ENCODE measurements at regions of chr1 and their contacts with region 1.

Region 1: DNA sequence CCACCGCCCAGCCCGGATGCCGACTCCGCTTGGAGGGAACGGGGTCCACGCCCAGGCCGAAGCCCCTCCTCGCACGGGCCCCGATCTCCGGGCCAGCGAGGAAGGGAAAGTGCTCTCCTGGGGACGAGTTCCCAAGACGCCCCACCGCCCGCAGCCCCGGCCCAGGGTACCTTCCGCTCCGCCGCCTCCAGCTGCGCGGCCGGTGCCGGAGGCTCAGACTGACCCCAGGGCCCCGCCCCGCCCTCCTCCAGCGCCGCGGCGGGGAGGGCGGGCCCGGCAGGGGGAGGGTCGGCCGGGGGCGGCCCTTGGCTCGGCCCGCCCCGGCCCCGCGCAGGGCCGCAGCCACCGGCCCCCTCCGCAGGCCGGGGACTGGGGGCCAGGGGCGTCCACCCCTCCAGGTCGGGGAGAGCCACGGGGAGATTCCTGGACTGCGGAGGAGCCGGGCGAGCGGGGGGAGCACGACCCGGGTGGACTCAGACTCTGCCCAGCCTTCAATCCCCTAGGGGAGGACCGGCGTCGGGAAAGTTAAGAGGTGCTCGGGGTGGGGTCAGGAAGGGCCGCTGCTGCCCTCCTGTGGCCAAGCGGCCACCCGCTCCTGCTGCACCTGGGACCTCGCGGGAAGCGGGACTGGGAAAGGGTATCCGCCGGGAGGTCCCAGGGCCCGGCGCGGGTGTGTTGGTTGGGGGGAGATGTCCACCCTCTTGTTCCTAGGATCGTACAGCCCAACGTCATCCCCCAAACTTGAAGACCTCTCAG is at the start of gene RHOC:
- DNase-seq: peak; percentile 90 to 93 (median 92)
- ATAC-seq: peak; percentile 56 to 87 (median 74)
- H3K4me3 ChIP-seq: peak within 1 kb of the TSS; percentile 75 to 100 (median 98)
- H3K27ac ChIP-seq: peak within 1 kb of the TSS; percentile 92 to 100 (median 99)
- H3K4me1 ChIP-seq: peaks cover 3 to 49% (median 39%) of the 10 kb centered on the region in 12 donors
- H3K27me3 ChIP-seq: no peaks in the 10 kb centered on the region
- CTCF ChIP-seq: peak; percentile 83 to 97 (median 94)
- POLR2A ChIP-seq: peak; percentile 64 to 95
- total RNA-seq, gene RHOC: 147 to 432 (median 217) TPM

Region 2: DNA sequence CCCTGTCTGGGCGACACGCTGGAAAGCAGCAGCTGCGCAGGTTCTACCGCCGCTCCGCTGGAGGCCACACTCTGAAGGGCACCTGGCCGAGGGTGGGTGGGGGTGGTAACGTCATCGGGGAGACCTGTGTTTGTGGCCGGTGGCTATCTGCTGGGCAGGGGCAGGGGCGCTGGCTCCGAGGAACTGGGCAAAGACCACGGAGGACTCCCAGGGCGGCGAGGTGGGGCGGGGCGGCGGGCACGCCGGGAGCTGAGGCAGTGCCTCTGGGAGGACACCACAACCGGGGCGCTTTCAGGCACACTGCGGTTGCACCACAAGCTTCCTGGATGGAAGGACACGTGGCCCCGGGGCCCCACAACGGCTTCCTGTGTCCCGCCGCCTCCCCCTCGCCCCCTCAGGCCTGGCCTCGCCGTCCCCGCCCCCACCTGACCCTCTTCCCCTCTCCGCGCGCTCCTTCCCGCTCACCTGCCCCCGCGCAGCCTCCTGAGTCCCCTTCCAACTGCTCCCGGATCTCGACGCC is 1503.3 kb before region 1 on chr1:
- intact Hi-C with region 1: no loop called
- DNase-seq: peak; percentile 65 to 90 (median 82)
- ATAC-seq: peak in 3 of 4 donors; percentile 35 to 73 (median 66)
- H3K4me3 ChIP-seq: peak overlapping the region; percentile 32 to 73 (median 64)
- H3K27ac ChIP-seq: peak overlapping the region in 7 of 12 donors; percentile 11 to 93 (median 46)
- H3K4me1 ChIP-seq: peaks cover 0 to 62% (median 6%) of the 10 kb centered on the region in 12 donors
- H3K27me3 ChIP-seq: peaks cover 0 to 22% (median 4%) of the 10 kb centered on the region in 9 donors
- CTCF ChIP-seq: no peak
- POLR2A ChIP-seq: no peak

Region 3: GRCh38 chr1:112105557-112105956 is 601.5 kb before region 1 on chr1:
- intact Hi-C with region 1: no loop called
- DNase-seq: no peak
- ATAC-seq: no peak
- H3K4me3 ChIP-seq: no peak overlapping the region
- H3K27ac ChIP-seq: no peak overlapping the region
- H3K4me1 ChIP-seq: no peaks in the 10 kb centered on the region
- H3K27me3 ChIP-seq: no peaks in the 10 kb centered on the region
- CTCF ChIP-seq: no peak
- POLR2A ChIP-seq: no peak

Region 4: GRCh38 chr1:112466078-112466660 is 240.9 kb before region 1 on chr1:
- intact Hi-C with region 1: loop called in 2 of 10 experiments (anchors 10 kb)
- DNase-seq: peak; percentile 97 to 98 (median 97)
- ATAC-seq: peak; percentile 88 to 96 (median 93)
- H3K4me3 ChIP-seq: peak overlapping the region in 11 of 12 donors; percentile 1 to 59 (median 48)
- H3K27ac ChIP-seq: peak overlapping the region; percentile 39 to 77 (median 71)
- H3K4me1 ChIP-seq: peaks cover 0 to 29% (median 14%) of the 10 kb centered on the region in 12 donors
- H3K27me3 ChIP-seq: no peaks in the 10 kb centered on the region
- CTCF ChIP-seq: peak; percentile 75 to 97 (median 87)
- POLR2A ChIP-seq: peak in 1 of 2 donors; percentile 40

Region 5: GRCh38 chr1:112619520-112620376 is 87.3 kb before region 1 on chr1 and contains the start of gene CAPZA1:
- intact Hi-C with region 1: loop called in 9 of 10 experiments (anchors 1 to 2 kb)
- DNase-seq: peak; percentile 93 to 95 (median 94)
- ATAC-seq: peak; percentile 97 to 99 (median 98)
- H3K4me3 ChIP-seq: peak within 1 kb of the TSS; percentile 71 to 99 (median 89)
- H3K27ac ChIP-seq: peak within 1 kb of the TSS; percentile 92 to 100 (median 98)
- H3K4me1 ChIP-seq: peaks cover 0 to 59% (median 46%) of the 10 kb centered on the region in 12 donors
- H3K27me3 ChIP-seq: no peaks in the 10 kb centered on the region
- CTCF ChIP-seq: no peak
- POLR2A ChIP-seq: peak in 1 of 2 donors; percentile 74
- total RNA-seq, gene CAPZA1: 23.8 to 98.4 (median 32.6) TPM